ENCODE measurements at regions of chr12 and their contacts with region 1.

Region 1: DNA sequence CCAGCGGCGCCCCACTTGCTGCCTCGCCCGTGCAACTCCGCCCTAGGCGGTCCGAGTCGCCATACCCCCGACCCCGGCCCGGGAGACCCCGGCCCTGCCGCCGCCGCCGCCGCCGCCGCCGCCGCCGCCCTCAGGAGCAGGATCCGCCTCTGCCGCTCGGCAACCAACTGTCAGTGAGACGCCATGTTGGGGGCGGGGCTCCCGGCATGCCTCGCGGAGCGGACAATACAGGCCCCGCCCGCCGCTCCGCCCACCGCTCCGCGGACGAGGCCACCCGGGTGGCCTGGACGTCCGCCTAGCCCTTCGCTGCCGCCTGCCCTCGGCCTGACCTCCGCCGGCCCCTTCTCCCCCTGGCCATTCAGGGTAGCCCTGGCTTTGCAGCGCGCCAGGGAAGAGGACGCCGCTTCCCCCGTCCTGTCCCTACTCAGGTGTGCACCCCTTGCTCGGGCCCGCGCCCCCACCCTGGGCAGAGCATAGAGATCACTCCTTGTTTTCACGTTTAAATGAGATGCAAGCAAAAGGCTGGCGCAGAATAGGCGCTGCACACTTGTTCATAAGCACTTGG is at the start of gene HECTD4:
- DNase-seq: peak; percentile 95
- H3K4me3 Mint-ChIP-seq: peak within 1 kb of the TSS; percentile 96
- H3K27ac Mint-ChIP-seq: peak within 1 kb of the TSS; percentile 80
- H3K4me1 Mint-ChIP-seq: peaks cover 27% of the 10 kb centered on the region
- H3K27me3 Mint-ChIP-seq: no peaks in the 10 kb centered on the region
- total RNA-seq, gene HECTD4: 17.6 to 19.2 TPM

Region 2: GRCh38 chr12:111841750-111842555 is 540.4 kb before region 1 on chr12 and contains the start of gene MAPKAPK5:
- CTCF ChIA-PET with region 1: no interaction called
- intact Hi-C with region 1: loop called (anchors 1 kb)
- DNase-seq: peak; percentile 97
- H3K4me3 Mint-ChIP-seq: peak within 1 kb of the TSS; percentile 91
- H3K27ac Mint-ChIP-seq: peak within 1 kb of the TSS; percentile 95
- H3K4me1 Mint-ChIP-seq: peaks cover 54% of the 10 kb centered on the region
- H3K27me3 Mint-ChIP-seq: no peaks in the 10 kb centered on the region
- total RNA-seq, gene MAPKAPK5: 41.9 to 43.6 TPM

Region 3: DNA sequence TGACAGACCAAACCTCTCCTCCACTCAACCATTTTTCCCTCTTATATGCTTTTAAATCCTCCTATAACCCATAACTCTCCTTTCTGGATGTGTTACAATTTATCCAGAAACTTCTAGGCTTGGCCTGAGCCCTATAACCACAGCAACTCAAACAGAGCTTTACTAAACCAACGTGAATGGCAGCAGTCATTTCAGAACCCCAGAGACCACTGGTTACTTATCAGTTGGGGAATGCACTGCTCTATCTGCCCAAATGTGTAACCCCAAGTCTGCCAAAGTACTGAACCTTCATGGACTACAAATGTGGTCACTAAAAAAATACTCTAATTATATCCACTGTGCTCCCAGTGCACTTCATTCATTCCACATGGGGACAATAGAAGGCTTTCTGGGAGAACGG is 315.7 kb before region 1 on chr12:
- CTCF ChIA-PET with region 1: no interaction called
- intact Hi-C with region 1: loop called (anchors 10 kb)
- DNase-seq: no peak
- H3K4me3 Mint-ChIP-seq: no peak overlapping the region
- H3K27ac Mint-ChIP-seq: peak overlapping the region; percentile 3
- H3K4me1 Mint-ChIP-seq: no peaks in the 10 kb centered on the region
- H3K27me3 Mint-ChIP-seq: no peaks in the 10 kb centered on the region

Region 4: DNA sequence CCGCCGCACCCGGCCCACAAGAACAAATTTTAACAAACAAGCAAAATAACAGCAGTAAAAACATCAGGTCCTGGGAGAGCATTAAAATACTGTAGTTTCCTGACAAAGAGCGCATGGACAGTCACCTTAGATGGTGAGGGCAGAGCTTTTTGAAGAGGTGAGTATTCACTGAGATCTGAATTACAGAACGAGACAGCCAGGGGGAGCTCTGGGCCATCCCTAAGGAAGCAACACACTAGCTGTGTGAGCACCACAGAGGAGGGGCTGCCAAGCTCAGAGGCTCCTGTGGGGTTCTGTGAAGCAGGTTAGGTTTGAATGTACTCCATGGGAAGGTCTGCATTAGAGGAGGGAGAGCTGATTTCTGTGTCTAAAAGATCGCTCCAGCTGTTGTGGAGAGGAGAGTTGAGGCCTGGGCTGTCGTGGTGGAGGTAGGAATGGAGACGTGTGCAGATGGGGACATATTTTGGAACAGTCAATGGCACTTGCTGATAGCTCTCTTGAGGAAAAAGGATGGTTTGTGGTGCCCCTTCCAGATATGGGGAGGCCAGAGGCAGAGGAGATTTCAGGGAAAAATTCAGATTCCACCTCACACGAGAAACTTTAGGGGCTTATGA is 184.1 kb before region 1 on chr12:
- CTCF ChIA-PET with region 1: interaction called, 62 read pairs
- intact Hi-C with region 1: loop called (anchors 1 kb)
- DNase-seq: peak; percentile 80
- H3K4me3 Mint-ChIP-seq: no peak overlapping the region
- H3K27ac Mint-ChIP-seq: no peak overlapping the region
- H3K4me1 Mint-ChIP-seq: no peaks in the 10 kb centered on the region
- H3K27me3 Mint-ChIP-seq: no peaks in the 10 kb centered on the region

Region 5: DNA sequence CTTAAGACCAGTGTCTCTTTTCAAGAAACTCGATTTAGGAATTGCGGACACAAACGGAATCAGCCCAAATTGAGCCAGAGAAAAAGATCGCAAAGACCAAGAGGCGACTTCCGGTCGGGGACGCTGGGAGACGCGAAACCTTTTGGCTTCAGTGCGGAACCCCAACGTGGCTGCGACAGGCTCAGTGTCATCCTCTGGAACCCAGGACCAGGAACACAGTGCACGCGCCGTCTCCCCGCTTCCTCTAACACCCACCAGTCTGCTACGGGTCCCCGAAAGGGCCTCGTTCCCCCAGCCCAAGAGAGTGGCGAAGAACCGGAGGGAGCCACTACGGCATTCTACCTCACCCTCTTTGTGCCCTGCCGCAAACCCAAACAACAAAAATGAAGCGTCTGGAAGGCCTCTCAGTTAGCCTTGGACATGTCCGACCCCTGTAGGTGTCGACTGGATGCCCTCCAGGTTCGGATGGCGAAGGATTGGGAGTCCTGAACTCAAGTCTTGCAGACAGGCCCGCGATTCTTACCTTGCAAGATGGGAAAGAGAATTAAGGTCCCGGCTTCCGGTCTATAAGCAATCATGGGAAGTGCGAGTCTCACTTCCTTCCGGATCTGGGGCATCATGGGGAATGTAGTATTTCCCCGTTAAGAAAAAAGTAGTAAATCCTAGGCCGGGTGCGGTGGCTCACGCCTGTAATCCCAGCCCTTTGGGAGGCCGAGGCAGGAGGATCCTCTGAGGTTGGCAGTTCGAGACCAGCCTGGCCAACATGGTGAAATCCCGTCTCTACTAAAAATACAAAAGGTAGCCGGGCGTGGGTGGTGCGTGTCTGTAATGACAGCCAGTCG is 27.0 kb after region 1 on chr12 and contains the start of gene RPL6:
- CTCF ChIA-PET with region 1: interaction called, 6 read pairs
- intact Hi-C with region 1: loop called (anchors 1 kb)
- DNase-seq: peak; percentile 88
- H3K4me3 Mint-ChIP-seq: peak within 1 kb of the TSS; percentile 100
- H3K27ac Mint-ChIP-seq: peak within 1 kb of the TSS; percentile 100
- H3K4me1 Mint-ChIP-seq: peaks cover 43% of the 10 kb centered on the region
- H3K27me3 Mint-ChIP-seq: no peaks in the 10 kb centered on the region
- total RNA-seq, gene RPL6: 2,358 to 2,432 TPM

Measured in activated naive CD4-positive, alpha-beta T cell treated with anti-CD3 and anti-CD28 coated beads for 36 hours (primary cell).